Calu3 (cell line): ENCODE measurements at regions of chr6 and their contacts with region 1.

Region 1: GRCh38 chr6:105317607-105318533 is 85.0 kb downstream of the PREP start:
- DNase-seq: peak; percentile 46
- H3K4me3 Mint-ChIP-seq: no peak overlapping the region
- H3K27ac Mint-ChIP-seq: no peak overlapping the region
- H3K4me1 Mint-ChIP-seq: no peaks in the 10 kb centered on the region
- H3K27me3 Mint-ChIP-seq: no peaks in the 10 kb centered on the region
- CTCF ChIP-seq: peak; percentile 45

Region 2: GRCh38 chr6:105189026-105189820 is 128.6 kb before region 1 on chr6:
- CTCF ChIA-PET with region 1: no interaction called
- intact Hi-C with region 1: no loop called
- DNase-seq: no peak
- H3K4me3 Mint-ChIP-seq: no peak overlapping the region
- H3K27ac Mint-ChIP-seq: no peak overlapping the region
- H3K4me1 Mint-ChIP-seq: no peaks in the 10 kb centered on the region
- H3K27me3 Mint-ChIP-seq: no peaks in the 10 kb centered on the region
- CTCF ChIP-seq: no peak

Region 3: DNA sequence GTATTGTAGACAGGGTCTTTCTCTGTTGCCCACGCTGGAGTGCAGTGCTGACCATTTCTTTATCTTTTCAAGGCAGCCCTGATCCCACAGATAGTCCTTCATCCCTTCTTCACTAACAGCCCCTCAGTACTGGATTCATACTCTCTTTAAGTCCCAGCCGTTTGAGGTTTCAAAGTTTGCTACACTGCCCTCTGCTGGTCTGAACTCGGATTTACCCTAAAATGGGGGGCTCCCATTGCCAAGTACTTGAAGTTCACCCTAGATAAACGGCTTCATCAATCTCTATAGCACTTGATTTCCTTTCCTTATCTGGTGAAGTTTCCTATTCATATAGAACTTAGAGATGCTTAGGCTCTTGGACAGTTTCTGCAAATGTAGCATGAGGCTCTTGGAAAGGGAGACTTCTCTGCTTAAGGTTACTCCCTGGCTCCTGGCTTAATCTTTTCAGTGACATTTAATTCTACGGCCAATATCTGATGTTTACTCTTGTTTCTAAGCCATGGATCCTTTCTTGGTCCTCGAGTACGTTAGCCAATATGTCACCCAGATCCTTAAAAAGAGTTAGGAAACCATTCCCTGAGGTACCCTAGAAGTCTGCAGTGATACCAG is 106.4 kb after region 1 on chr6:
- CTCF ChIA-PET with region 1: no interaction called
- intact Hi-C with region 1: loop called (anchors 5 kb)
- DNase-seq: peak; percentile 58
- H3K4me3 Mint-ChIP-seq: no peak overlapping the region
- H3K27ac Mint-ChIP-seq: no peak overlapping the region
- H3K4me1 Mint-ChIP-seq: peaks cover 28% of the 10 kb centered on the region
- H3K27me3 Mint-ChIP-seq: no peaks in the 10 kb centered on the region
- CTCF ChIP-seq: peak; percentile 64